ENCODE measurements at regions of chr1 and their contacts with region 1.

Region 1: DNA sequence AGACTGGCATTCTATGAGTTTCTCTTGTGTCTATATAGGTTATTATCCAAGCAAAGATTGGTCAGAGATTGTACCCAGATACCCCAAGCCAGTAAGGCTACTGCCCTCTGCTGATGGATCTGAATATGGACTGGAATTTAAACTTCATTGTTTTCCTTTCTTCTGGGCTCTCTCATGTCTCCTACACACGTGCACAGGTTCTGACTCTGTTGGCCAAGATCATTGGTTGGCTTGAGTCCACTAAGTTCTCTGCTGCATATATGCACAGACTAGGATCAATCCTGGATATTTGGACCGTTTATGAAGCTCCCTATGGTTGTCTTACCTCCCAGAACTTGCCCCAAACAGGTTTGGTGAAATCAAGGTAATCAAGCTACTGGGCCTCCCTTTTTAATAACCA is 69.7 kb downstream of the CC2D1B start:
- DNase-seq: peak; percentile 7
- ATAC-seq: peak; percentile 86
- H3K4me3 ChIP-seq: no peak overlapping the region
- H3K27ac ChIP-seq: no peak overlapping the region
- H3K4me1 ChIP-seq: no peaks in the 10 kb centered on the region
- H3K27me3 ChIP-seq: no peaks in the 10 kb centered on the region
- CTCF ChIP-seq: peak; percentile 67 to 77 (median 68)
- EP300 ChIP-seq: no peak
- POLR2A ChIP-seq: no peak
- RAD21 ChIP-seq: peak; percentile 94

Region 2: DNA sequence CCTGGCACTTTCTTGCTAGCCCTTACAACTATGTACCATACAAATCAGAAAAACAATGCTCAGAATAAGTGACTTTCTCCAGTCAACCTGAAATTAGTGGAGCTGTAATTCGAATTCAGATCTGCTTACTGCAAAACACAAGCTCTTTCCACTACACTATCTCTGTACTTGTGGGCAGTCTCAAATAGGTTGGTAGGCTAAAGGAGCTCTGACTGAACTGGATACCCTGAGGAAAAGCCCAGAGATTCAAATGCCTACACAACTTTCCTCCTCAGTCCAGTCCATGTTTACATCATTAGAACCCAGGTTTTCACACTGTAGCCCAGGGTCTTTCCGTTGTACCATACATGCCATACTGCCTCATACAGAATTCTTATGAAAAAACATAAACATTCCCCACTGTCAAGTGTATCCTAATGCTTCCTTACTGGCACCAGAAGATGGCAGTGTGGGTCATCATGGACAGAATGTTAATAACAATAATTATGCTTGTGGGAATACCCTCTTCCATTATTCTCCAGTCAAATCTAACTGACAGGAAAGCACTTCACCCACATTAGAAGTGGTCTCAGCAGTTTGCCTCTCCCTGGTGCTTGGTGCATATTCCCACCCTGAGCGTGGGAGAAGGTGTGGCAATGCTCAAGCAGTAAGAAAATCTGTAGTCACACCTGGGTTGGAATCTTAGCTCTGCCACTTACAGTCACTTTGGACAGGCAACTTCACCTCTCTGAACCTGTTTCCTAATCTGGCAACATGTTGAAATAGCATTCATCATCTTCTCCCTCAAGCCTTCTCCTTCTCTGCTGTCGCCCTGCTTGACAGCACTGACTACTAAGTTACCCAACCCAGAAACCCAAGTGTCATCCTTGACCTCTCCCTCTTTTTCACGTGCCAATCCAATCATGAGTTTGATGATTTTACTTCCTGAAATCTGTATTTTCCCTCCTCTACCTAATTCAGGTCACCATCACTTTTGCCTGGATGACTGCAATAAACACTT is 168.9 kb before region 1 on chr1:
- CTCF ChIA-PET with region 1: interaction called, 7 read pairs
- POLR2A ChIA-PET with region 1: no interaction called
- RAD21 ChIA-PET with region 1: no interaction called
- SMC1A ChIA-PET with region 1: interaction called, 9 read pairs
- in situ Hi-C with region 1: loop called (anchors 25 kb)
- intact Hi-C with region 1: loop called (anchors 2 kb)
- DNase-seq: no peak
- ATAC-seq: peak; percentile 82
- H3K4me3 ChIP-seq: no peak overlapping the region
- H3K27ac ChIP-seq: no peak overlapping the region
- H3K4me1 ChIP-seq: no peaks in the 10 kb centered on the region
- H3K27me3 ChIP-seq: no peaks in the 10 kb centered on the region
- CTCF ChIP-seq: peak; percentile 59 to 74 (median 66); a peak in 5 of 6 replicates
- EP300 ChIP-seq: no peak
- POLR2A ChIP-seq: no peak
- RAD21 ChIP-seq: peak; percentile 83

Region 3: GRCh38 chr1:52141513-52142219 is 154.7 kb before region 1 on chr1 and contains the start of gene ZFYVE9:
- CTCF ChIA-PET with region 1: interaction called, 8 read pairs
- POLR2A ChIA-PET with region 1: no interaction called
- RAD21 ChIA-PET with region 1: interaction called, 5 read pairs
- SMC1A ChIA-PET with region 1: interaction called, 8 read pairs
- in situ Hi-C with region 1: loop called (anchors 25 kb)
- intact Hi-C with region 1: loop called (anchors 1 kb)
- DNase-seq: no peak
- ATAC-seq: peak; percentile 89
- H3K4me3 ChIP-seq: peak within 1 kb of the TSS; percentile 79
- H3K27ac ChIP-seq: peak within 1 kb of the TSS; percentile 21
- H3K4me1 ChIP-seq: peaks cover 11% of the 10 kb centered on the region; the same call in 1 of the 2 replicates
- H3K27me3 ChIP-seq: no peaks in the 10 kb centered on the region; a peak in 1 of 4 replicates
- CTCF ChIP-seq: peak; percentile 62 to 84 (median 64); a peak in 5 of 6 replicates
- EP300 ChIP-seq: no peak
- POLR2A ChIP-seq: no peak; the same call in 1 of the 2 replicates
- RAD21 ChIP-seq: peak; percentile 60
- polyA plus RNA-seq, gene ZFYVE9: 0.26 to 0.47 TPM

Region 4: DNA sequence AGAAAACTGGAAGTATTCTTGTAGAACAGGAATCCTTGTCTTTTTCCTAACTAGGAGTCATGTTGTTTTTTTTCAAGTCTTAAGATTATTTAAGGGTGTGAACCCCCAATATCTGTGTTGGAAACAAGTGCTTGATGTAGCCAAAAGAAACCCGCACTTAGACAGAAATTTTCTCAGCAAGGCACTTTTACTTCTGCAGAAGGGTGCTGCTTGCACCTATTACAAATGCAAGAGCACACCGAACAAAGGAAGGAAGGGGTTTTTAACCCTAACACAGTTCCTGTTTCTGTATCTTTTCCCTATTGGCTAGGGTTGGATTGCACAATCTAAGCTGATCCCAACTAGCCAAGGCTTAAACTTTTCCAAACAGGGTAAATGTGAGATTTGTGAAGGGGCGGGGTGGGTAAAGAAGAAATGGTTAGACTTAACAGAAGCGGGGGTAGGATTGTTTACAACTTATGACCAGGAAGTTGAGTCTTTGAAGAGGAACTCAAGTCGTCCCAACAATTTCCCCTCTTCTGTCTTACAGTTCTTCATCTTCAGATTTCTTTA is 79.4 kb before region 1 on chr1:
- CTCF ChIA-PET with region 1: no interaction called
- POLR2A ChIA-PET with region 1: no interaction called
- RAD21 ChIA-PET with region 1: no interaction called
- SMC1A ChIA-PET with region 1: no interaction called
- in situ Hi-C with region 1: no loop called
- intact Hi-C with region 1: no loop called
- DNase-seq: no peak
- ATAC-seq: no peak
- H3K4me3 ChIP-seq: no peak overlapping the region
- H3K27ac ChIP-seq: no peak overlapping the region
- H3K4me1 ChIP-seq: no peaks in the 10 kb centered on the region
- H3K27me3 ChIP-seq: no peaks in the 10 kb centered on the region
- CTCF ChIP-seq: no peak
- EP300 ChIP-seq: no peak
- POLR2A ChIP-seq: no peak
- RAD21 ChIP-seq: no peak